HEK293 (cell line): ENCODE measurements at regions of chr6 and their contacts with region 1.

Region 1: DNA sequence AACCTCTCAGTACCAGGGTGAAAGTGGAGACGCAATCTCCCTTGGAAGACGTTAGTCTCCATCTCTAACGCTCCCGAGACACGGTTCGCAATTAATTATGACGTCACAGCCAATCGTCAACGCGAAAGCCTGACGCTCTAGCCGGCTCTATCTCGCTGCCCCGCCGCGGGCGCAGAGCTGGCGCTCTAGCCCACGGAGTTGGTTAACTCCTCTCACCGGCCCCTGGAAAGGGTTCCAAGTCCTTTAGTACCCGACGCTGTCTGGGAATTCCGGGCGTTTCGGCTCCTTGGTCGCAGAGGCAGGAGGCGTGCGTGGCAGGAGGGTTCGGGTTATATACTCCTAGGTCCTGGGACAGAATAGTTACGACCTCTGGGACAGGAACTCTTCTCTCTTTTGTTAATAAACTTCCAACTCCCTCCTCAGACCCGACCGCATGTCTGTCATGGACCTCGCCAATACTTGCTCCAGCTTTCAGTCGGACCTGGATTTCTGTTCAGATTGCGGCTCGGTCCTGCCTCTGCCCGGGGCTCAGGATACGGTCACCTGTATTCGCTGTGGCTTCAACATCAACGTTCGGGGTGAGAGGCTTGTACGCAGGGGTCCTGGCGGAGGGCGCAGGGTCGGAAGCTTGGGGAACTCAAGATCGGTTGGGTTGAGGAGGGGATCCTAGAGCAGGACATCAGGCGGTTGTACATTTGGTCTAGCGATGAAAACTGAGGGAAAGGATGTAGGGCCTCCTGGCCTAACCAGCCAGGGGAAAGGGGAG is at the start of gene POLR1H:
- H3K4me3 ChIP-seq: peak within 1 kb of the TSS; percentile 75
- H3K27ac ChIP-seq: peak within 1 kb of the TSS; percentile 72
- H3K4me1 ChIP-seq: peaks cover 7% of the 10 kb centered on the region
- CTCF ChIP-seq: no peak

Region 2: GRCh38 chr6:30006170-30007131 is 54.8 kb before region 1 on chr6:
- CTCF ChIA-PET with region 1: no interaction called
- POLR2A ChIA-PET with region 1: no interaction called
- H3K4me3 ChIP-seq: no peak overlapping the region
- H3K27ac ChIP-seq: no peak overlapping the region
- H3K4me1 ChIP-seq: no peaks in the 10 kb centered on the region
- CTCF ChIP-seq: no peak

Region 3: DNA sequence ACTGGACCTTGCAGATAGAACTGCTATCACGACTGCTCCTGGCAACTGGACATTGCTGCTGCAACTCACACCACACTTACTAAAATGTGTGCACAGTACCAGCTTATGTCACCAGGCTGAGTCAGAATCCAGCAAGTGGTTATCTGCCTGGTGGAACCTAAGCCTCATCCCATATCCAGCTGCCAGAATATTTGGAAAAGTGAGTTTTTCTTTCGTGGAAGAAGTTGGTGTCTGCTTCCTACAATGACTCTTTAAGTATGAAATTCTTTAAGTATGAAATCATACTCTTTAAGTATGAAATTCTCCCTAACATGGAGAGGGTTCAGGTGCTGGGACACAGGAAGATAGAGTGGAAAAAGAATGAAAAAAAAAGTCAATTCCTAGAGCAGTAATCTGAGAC is 16.6 kb before region 1 on chr6:
- CTCF ChIA-PET with region 1: no interaction called
- POLR2A ChIA-PET with region 1: interaction called, 11 read pairs
- H3K4me3 ChIP-seq: no peak overlapping the region
- H3K27ac ChIP-seq: no peak overlapping the region
- H3K4me1 ChIP-seq: peaks cover 7% of the 10 kb centered on the region
- CTCF ChIP-seq: no peak

Region 4: GRCh38 chr6:30091577-30092381 is 30.5 kb after region 1 on chr6:
- CTCF ChIA-PET with region 1: interaction called, 3 read pairs
- POLR2A ChIA-PET with region 1: interaction called, 10 read pairs
- H3K4me3 ChIP-seq: no peak overlapping the region
- H3K27ac ChIP-seq: no peak overlapping the region
- H3K4me1 ChIP-seq: peaks cover 4% of the 10 kb centered on the region
- CTCF ChIP-seq: no peak